PC-3 (cell line): ENCODE measurements at regions of chr18 and their contacts with region 1.

Region 1: DNA sequence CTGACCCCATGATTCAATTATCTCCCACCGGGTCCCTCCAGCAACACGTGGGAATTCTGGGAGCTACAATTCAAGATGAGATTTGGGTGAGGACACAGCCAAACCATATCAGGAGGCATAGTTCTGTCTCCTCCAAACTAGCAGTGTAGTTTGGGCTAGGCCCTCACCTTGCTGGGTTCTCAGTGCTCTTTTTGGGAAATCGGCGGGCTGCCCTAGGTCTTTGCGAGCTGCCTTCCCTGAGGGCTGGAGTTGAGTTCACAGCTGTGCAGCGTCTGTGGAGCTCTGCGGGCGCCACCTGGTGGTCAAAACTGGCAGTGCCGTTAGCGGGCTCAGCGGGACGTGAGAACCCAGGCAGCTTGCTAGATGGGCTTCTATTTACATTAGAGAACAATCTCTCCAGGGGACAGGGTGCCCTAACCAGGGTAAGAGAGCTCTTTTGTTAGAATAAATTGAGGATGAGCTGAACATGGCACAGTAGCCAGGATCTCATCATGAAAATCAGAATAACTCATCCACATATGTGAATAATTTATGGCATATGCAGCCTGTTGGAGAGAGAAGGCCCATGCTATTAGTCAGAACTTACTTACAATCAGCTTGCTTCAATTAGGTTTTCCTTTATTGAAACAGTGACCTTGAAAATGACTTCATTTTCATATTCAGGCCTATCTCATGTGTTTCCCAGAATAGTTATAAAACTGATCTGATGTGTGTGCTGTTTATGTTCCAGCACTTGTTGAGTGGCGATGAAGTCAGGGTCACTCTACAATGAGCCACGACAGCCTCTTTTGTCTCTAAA is 27.4 kb upstream of the YES1 start:
- DNase-seq: peak; percentile 93
- ATAC-seq: peak; percentile 92
- H3K4me3 ChIP-seq: no peak overlapping the region
- H3K27ac ChIP-seq: no peak overlapping the region
- H3K4me1 ChIP-seq: peaks cover 11% of the 10 kb centered on the region
- H3K27me3 ChIP-seq: no peaks in the 10 kb centered on the region
- CTCF ChIP-seq: peak; percentile 97

Region 2: GRCh38 chr18:712401-713134 is 126.9 kb before region 1 on chr18 and contains the start of gene ENOSF1:
- CTCF ChIA-PET with region 1: interaction called, 14 read pairs
- POLR2A ChIA-PET with region 1: no interaction called
- intact Hi-C with region 1: no loop called
- DNase-seq: peak; percentile 84
- ATAC-seq: peak; percentile 84
- H3K4me3 ChIP-seq: peak within 1 kb of the TSS; percentile 80
- H3K27ac ChIP-seq: peak within 1 kb of the TSS; percentile 63
- H3K4me1 ChIP-seq: peaks cover 13% of the 10 kb centered on the region
- H3K27me3 ChIP-seq: no peaks in the 10 kb centered on the region
- CTCF ChIP-seq: peak; percentile 66
- total RNA-seq, gene ENOSF1: 44.2 and 61.0 TPM in 2 replicates